HEK293T (cell line): ENCODE measurements at regions of chr20 and their contacts with region 1.

Region 1: GRCh38 chr20:53335555-53335954 is 258.1 kb downstream of the ZNF217 start:
- DNase-seq: no peak

Region 2: DNA sequence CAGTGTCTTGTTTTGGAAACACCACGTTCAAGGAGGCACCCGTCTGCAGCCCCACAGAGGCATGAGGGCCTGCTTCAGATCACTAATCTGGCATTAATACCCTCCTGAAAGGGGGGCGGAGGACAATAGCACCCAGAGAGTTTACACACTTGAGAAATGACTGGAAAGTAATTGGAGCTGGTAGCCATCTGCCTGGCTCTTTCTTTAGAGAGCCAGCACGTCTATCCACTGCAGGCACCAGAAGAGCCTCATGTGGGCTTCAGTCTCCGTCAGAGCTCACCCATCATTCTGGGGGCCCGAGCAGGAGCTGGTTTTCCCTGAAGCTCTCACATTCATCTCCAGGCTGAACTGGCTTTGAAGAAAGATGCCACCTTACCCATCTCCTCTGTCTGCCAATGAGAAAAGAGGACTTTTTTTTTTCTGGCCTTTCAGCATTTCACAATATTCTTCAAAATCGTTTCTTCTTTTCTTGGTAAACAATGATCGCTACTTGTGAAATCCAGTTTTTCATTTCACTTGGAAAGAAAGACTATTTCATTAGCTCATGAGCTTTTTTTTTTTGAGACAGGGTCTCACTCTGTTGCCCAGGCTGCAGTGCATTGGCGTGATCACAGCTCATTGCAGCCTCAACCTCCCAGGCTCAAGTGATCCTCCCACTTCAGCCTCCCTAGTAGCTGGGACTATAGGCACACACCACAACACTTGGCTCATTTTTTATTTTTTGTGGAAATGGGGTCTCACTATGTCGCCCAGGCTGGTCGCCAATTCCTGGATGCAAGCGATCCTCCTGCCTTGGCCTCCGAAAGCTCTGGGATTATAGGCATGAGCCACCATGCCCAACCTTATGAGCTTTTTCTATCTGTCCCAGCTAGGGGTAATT is 382.8 kb after region 1 on chr20:
- CTCF ChIA-PET with region 1: interaction called, 10 read pairs
- POLR2A ChIA-PET with region 1: no interaction called
- DNase-seq: no peak